Naive thymus-derived CD4-positive, alpha-beta T cell (primary cell): ENCODE measurements at regions of chr12 and their contacts with region 1.

Region 1: DNA sequence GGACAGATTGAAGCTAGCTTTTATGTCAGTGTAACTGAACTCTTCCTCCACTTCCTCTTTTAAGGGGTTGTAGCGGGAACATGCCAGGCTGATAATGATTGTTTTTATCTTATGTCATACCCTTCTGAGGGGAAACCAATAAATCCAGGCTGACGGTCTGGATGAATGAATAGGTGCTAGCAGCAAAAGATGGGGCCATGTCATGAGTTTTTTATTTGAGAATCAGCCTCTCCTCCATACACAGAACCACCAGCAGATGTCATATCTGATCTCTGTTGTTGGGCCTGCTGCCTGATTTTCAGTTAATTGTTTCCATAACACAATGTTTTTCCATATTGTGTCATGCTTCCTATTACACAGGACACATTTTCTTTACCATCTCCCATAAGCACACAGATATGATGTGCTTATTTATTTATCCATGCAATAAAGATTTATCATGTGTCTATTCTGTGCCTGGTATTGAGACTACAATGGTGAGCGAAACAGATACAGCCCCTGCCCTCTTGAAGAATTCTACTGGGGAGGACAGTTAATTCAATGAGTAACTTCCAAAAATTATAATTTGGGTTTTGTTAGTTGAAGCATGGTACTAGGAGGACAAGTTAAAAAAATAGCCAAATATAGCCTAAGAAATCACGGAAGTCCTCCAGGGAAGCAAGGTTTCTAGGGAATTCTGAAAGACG is 33.6 kb upstream of the CRY1 start:
- DNase-seq: peak in 2 of 9 donors; percentile 11 to 16
- ATAC-seq: no peak
- H3K4me3 ChIP-seq: no peak overlapping the region
- H3K4me3 Mint-ChIP-seq: no peak overlapping the region
- H3K27ac ChIP-seq: no peak overlapping the region
- H3K27ac Mint-ChIP-seq: no peak overlapping the region
- H3K4me1 ChIP-seq: no peaks in the 10 kb centered on the region
- H3K4me1 Mint-ChIP-seq: no peaks in the 10 kb centered on the region
- H3K27me3 ChIP-seq: peaks cover 0 to 3% of the 10 kb centered on the region in 2 donors
- H3K27me3 Mint-ChIP-seq: peaks cover 5 to 31% (median 16%) of the 10 kb centered on the region in 5 donors

Region 2: DNA sequence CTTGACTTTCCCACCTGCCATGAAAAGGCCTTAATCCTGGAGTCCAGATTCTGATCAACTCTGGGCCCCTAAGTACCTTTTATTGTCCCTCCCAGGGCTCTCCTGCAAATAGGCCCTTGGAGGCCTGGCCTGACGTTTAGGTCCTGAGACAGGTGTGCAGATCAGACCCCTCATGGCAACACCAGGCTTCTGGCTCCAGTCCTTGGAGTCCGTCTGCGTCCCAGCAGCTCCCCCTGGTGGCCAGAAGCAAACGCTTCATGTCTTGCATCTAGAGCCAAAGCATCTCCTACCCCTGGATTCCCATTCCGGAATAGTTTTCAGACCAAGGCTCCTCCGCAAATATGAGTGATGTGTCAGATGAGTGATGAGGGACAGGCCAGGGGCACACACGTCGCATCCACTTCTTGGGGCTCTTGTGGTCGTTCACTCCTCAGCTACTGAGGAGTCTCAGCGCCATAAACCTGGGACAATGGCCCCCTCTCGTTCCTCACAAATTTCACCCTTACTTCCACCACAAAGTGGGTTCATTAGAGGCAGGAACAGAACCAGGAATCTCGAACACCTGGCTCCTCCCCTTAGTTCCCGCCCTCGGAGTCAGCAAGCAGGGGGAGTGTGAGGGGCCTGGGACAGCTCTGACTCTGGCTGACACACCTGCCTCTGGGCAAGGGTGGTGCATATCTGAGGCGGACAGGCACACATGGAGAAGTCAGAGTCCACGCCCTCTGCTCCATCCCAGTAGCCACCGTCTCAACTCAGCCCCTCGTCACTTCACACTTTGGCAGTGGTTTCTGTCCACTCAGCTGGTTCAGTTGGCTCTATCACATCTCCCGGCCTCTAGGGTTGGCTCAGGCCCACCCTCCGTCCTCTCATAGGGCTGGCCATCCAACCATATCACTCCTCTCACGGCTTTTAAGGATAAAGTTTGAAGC is 480.8 kb after region 1 on chr12:
- CTCF ChIA-PET with region 1: interaction called, 150 read pairs
- POLR2A ChIA-PET with region 1: interaction called, 4 read pairs
- intact Hi-C with region 1: loop called (anchors 1 kb)
- DNase-seq: peak; percentile 55 to 82 (median 71)
- ATAC-seq: peak; percentile 78
- H3K4me3 ChIP-seq: no peak overlapping the region
- H3K4me3 Mint-ChIP-seq: no peak overlapping the region
- H3K27ac ChIP-seq: no peak overlapping the region
- H3K27ac Mint-ChIP-seq: peak overlapping the region in 2 of 9 donors; percentile 9 to 25
- H3K4me1 ChIP-seq: no peaks in the 10 kb centered on the region
- H3K4me1 Mint-ChIP-seq: no peaks in the 10 kb centered on the region
- H3K27me3 ChIP-seq: no peaks in the 10 kb centered on the region
- H3K27me3 Mint-ChIP-seq: no peaks in the 10 kb centered on the region